ENCODE measurements at regions of chr3 and their contacts with region 1.

Region 1: DNA sequence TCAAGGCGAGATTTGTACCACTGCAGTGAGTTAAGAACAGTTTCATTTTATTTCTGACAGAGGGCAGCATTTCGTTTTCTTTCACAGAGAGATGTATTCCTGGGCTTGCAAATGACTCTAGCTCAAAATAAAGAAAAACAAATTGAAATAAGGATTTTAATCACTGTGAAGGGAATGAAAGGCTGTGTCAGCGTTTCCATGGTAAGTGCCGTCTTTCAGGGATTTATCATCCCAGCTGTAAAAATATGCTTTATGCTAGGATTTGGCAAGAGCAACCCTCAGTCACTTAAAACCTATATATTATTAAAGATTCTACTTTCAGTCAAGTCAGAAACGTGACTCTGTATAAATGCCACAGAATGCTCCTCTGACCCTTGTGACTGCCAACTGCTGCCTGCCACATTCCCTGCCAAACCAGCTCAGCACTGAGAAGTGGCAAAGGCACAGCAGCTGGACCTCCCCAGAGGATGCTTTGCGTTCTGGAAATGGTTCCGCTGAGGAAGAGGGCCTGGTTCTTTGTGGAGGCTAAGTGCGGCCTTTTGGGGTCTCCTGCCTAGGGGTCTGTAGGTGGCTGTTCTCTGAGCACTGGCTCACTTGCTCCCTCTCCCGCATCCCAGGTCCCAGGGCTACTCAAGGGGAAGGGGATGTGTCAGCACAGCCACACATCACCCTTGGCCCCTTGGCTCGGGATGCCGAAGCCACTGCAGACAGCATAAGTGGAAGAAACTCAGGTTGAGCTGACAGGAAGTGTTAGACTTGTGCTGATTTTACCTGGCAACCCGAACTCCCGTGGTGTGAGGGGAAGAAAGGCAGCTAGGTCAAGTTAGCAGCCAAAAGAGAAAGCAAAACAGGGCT is 56.6 kb upstream of the POMGNT2 start:
- DNase-seq: peak; percentile 84
- H3K4me3 ChIP-seq: peak overlapping the region in 1 of 4 donors; percentile 26
- H3K27ac ChIP-seq: peak overlapping the region in 1 of 4 donors; percentile 18
- H3K4me1 ChIP-seq: peaks cover 5 to 13% (median 9%) of the 10 kb centered on the region in 4 donors
- H3K27me3 ChIP-seq: no peaks in the 10 kb centered on the region
- CTCF ChIP-seq: peak; percentile 36 to 50 (median 43)
- EP300 ChIP-seq: no peak
- POLR2A ChIP-seq: no peak

Region 2: DNA sequence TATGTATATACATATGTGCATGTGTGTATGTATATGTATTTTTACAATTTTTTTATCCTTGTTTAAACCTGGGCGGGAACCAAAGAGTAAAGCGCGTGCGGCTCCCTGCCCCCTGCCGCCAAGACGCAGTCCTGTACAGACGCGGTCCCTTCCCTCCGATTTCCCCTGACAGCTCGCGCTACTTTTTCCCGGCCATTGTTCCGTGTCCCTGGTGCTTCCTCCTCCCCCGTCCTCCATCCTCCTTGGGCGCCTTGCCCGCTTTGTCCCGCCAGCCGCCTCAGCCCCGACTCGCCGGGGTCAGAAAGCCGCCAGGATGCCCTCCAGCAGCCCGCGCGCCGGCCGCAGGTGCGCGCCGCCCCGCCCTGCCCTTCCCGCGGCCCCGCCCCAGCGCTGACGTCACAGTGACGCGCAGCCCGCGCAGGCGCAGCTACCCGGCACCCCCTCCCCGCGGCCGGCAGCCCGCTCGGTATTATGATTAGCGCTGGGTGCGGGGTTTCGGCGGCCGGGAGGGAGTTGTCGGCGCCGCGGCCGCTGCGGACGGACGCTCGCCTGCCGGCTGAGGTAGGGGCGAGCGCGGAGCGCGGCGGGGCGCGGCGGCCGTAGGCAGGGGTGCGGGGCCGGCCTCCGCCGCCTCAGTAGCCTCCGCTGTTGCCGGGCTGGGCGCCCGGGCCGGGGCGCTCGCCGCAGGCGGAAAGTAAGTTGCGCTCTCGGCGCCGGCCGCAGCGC is 123.8 kb after region 1 on chr3 and contains the start of gene SNRK:
- intact Hi-C with region 1: loop called (anchors 10 kb)
- DNase-seq: peak; percentile 96
- H3K4me3 ChIP-seq: peak within 1 kb of the TSS; percentile 62 to 92 (median 70)
- H3K27ac ChIP-seq: peak within 1 kb of the TSS; percentile 86 to 96 (median 91)
- H3K4me1 ChIP-seq: peaks cover 35 to 49% (median 47%) of the 10 kb centered on the region in 4 donors
- H3K27me3 ChIP-seq: no peaks in the 10 kb centered on the region
- CTCF ChIP-seq: peak in 2 of 3 experiments; percentile 45
- EP300 ChIP-seq: no peak
- POLR2A ChIP-seq: no peak
- total RNA-seq, gene SNRK: 30.7 to 50.4 (median 45.8) TPM